Cardiac septum (tissue), 1 donor: ENCODE measurements at regions of chr2 and their contacts with region 1.

Region 1: DNA sequence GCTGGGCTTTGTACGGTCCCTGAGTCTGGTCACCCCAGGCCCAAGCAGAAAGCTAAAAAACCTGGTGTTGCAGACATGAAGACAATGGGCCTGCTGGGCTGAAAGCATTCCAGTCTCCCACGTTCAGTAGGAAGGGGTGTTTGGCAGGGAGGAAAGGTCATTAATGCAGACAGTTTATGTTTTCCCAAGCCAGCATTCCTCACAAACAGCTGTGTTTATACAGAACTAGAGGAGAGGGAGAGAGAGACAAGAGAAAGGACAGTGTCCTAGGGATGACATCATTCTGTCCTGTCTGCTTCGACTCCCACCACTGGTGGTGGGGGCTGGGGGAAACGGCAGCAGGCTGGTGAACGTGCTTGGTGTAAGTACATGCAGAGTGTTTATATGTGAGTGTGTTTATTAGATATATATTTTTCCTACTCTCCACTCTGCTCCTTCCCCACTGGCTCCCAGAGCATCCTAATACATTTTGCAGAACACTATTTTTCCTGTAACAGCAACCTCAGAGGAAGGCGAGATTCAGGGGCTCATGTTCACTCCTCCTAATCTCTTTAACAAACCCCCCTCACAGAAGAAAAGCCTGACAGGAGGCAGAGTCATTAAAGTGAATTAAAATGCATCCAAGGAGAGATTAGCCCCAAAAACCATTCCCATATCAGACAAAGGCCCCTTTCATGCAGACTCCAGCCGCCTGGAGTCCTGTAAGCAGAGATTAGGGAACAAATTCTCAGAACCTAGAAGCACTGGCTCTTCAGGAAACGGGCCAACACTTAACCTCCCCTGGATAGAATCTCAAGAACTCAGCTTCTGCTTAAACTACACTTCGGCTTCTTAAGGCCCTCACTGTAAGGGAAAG is 380.4 kb downstream of the TNS1 start:
- DNase-seq: no peak

Region 2: GRCh38 chr2:217086038-217086522 is 536.4 kb before region 1 on chr2:
- intact Hi-C with region 1: loop called (anchors 5 kb)
- DNase-seq: no peak

Region 3: GRCh38 chr2:217703102-217703501 is 80.7 kb after region 1 on chr2:
- intact Hi-C with region 1: no loop called
- DNase-seq: no peak

Region 4: GRCh38 chr2:217713395-217714286 is 91.2 kb after region 1 on chr2:
- intact Hi-C with region 1: loop called (anchors 5 kb)
- DNase-seq: peak; percentile 83

Region 5: DNA sequence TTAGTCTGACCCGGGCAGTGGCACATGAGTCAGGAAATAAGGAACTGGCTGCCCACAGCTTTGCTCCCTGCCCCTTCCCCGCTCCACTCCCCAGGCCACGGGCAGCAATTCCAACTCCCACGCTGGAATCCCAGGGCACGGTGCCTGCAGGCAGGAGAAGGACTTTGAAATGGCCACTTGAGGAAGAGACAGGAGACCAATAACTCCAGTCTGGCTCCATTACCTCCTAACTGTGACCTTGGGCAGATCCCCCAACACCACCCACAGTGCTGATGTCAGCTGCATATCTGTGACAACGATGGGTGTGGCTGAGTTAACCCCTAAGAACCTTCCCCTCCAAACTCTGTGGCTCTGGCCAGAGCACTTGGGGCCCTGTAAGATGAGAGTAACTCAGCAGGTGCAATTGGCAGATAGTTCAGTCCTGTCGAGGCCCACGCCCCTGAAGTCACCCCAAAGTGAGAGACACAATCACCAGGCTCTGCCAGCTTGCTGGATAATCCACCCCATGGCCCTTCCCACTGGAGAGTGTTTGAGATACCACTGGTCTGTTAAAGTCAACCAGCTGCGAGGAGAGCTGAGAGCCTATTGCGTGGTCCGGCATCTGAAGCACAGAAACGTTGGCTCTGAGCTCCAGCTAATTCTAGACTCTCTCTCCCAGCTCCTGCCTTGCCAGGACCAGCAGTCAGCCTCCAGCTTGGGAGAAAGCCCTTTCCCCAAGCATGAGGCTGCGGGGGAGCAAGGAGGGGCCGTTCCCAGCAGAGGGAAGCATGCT is 205.2 kb after region 1 on chr2:
- intact Hi-C with region 1: no loop called
- DNase-seq: no peak